ENCODE measurements at regions of chr11 and their contacts with region 1.

Region 1: DNA sequence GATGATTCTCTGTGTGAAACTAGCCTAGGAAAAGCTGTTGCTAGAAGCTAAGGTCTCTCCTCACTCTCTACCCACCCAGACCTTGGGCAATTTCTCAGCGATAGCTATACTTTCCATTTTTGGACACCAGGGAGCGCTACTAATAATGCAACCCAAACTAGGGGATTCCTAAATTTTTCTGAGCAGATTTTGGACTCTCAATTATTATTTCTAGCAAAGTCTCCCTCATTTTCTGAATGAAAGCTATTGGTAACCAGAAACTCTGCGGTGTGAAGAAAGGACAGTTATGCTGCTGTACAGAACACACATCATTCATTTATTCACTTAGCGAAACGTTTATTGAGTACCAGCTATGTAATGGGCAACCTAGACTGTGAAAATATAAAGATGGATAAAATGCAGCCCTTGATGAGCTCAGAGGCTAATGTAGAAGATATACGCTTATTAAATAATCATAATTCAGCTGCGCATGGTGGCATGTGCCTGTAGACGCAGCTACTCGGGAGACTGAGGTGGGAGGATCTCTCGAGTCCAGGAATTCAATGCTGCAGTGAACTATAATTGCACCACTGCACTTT is 6.1 kb upstream of the STIM1 start:
- DNase-seq: no peak
- H3K4me3 ChIP-seq: no peak overlapping the region
- H3K27ac ChIP-seq: no peak overlapping the region
- H3K27me3 ChIP-seq: peaks cover 4% of the 10 kb centered on the region
- CTCF ChIP-seq: peak; percentile 80

Region 2: DNA sequence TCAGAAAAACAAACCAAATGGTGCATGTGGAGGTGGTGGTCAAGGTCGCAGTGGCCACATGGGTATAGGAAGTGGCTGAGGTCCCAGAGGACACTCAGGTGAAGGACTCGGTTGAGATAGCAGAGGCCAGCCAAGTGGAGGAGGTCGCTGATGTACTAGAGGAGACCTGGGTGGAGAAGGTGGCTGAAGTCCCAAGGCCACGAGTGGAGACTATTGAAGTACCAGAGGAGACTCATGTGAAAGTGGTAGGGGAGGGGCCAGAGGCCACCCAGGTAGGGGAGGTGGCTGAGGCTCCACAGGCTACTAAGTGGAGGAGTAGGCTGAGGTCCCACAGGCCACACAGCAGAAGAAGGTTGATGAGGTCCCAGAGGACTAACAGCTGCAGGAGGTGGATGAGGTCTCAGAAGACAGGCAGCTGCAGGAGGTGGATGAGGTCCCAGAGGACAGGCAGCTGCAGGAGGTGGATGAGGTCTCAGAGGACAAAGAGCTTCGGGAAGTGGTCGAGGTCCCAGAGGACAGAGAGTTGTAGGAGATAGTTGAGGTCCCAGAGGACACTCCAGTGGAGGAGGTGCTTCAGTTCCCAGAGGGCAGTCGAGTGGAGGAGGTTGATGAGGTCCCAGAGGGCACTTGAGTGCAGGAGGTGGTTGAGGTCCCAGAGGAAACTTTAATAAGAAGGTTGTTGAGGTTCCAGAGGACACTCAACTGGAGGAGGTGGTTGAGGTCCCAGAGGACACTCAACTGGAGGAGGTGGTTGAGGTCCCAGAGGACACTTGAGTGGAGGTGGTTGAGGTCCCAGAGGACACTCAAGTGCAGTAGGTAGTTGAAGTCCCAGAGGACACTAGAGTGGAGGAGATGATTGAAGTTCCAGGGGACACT is 510.5 kb before region 1 on chr11:
- CTCF ChIA-PET with region 1: no interaction called
- POLR2A ChIA-PET with region 1: no interaction called
- DNase-seq: no peak
- H3K4me3 ChIP-seq: no peak overlapping the region
- H3K27ac ChIP-seq: no peak overlapping the region
- H3K27me3 ChIP-seq: no peaks in the 10 kb centered on the region
- CTCF ChIP-seq: no peak

Region 3: GRCh38 chr11:3674189-3674588 is 175.2 kb before region 1 on chr11:
- CTCF ChIA-PET with region 1: no interaction called
- POLR2A ChIA-PET with region 1: no interaction called
- DNase-seq: peak; percentile 16
- H3K4me3 ChIP-seq: no peak overlapping the region
- H3K27ac ChIP-seq: no peak overlapping the region
- H3K27me3 ChIP-seq: no peaks in the 10 kb centered on the region
- CTCF ChIP-seq: no peak

Region 4: GRCh38 chr11:3879216-3879966 is 30.0 kb after region 1 on chr11:
- CTCF ChIA-PET with region 1: interaction called, 10 read pairs
- POLR2A ChIA-PET with region 1: no interaction called
- DNase-seq: no peak
- H3K4me3 ChIP-seq: no peak overlapping the region
- H3K27ac ChIP-seq: no peak overlapping the region
- H3K27me3 ChIP-seq: no peaks in the 10 kb centered on the region
- CTCF ChIP-seq: no peak

Region 5: GRCh38 chr11:3927133-3927796 is 77.9 kb after region 1 on chr11:
- CTCF ChIA-PET with region 1: interaction called, 11 read pairs
- POLR2A ChIA-PET with region 1: no interaction called
- DNase-seq: no peak
- H3K4me3 ChIP-seq: no peak overlapping the region
- H3K27ac ChIP-seq: no peak overlapping the region
- H3K27me3 ChIP-seq: no peaks in the 10 kb centered on the region
- CTCF ChIP-seq: no peak

Region 6: GRCh38 chr11:3959015-3959919 is 109.9 kb after region 1 on chr11:
- CTCF ChIA-PET with region 1: interaction called, 10 read pairs
- POLR2A ChIA-PET with region 1: no interaction called
- DNase-seq: no peak
- H3K4me3 ChIP-seq: no peak overlapping the region
- H3K27ac ChIP-seq: no peak overlapping the region
- H3K27me3 ChIP-seq: no peaks in the 10 kb centered on the region
- CTCF ChIP-seq: peak; percentile 26; the same call in 1 of the 2 replicates

Region 7: DNA sequence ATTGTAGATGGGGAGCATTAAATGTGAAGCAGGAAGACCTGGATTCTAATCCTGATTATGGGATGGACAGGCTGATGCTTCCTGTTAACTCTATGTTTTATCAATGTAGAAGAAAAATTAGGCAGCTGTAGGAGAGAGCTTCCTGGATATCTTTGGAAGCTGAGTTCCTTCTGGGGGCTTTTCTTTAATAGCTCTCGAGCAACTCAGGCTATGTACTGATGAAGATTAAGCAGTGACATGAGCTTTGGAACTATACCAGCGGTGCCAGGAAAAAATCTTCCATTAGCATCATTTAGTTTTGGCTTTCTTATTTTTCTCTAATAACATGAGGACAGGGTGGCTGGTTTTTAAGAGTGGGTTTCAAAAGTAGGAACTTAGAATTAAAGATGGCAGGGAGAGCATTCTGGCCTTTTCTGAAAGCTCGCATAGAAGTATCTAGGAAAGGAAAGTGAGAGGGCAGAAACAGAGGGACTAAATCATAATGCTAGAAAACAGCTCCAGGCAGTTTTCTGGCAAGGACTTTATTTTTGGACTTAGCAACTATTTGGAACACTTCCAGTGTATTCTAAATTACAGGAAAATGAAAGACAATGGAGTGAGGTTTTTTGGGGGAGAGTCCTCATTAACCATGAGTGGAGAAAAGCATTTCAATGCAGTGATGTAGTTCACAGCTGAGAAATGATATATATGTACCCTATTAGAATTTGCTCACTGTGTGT is 176.0 kb after region 1 on chr11:
- CTCF ChIA-PET with region 1: interaction called, 28 read pairs
- POLR2A ChIA-PET with region 1: no interaction called
- DNase-seq: no peak
- H3K4me3 ChIP-seq: no peak overlapping the region
- H3K27ac ChIP-seq: no peak overlapping the region
- H3K27me3 ChIP-seq: no peaks in the 10 kb centered on the region
- CTCF ChIP-seq: no peak

Region 8: DNA sequence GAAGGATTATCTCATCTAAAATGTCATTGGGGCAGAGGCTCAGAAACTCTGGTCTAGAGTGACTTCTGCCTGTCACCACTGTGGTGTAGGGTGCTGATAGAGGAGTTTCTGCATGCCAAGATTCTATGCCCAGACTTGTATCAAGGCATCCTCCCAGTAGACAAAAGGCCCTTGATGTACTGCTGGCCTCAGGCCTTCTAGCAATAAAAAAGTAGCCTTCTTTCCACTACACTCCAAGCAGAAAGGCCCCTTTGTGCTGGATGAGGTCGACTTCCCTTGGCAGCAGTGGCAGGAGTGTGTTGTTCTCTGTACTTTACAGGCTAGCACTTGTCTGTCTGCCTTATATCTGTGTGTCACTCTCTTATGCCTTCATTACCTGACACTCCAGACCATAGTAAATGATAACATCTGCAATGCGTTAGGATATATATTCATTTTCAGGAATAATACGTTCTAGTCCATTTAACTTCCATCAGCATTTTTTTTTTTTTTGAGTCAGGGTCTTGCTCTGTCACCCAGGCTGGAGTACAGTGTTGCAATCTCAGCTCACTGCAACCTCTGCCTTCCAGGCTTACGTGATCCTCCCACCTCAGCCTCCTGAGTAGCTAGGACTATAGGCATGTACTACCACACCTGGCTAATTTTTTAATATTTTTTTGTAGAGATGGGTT is 195.7 kb after region 1 on chr11:
- CTCF ChIA-PET with region 1: interaction called, 18 read pairs
- POLR2A ChIA-PET with region 1: no interaction called
- DNase-seq: no peak
- H3K4me3 ChIP-seq: no peak overlapping the region
- H3K27ac ChIP-seq: no peak overlapping the region
- H3K27me3 ChIP-seq: no peaks in the 10 kb centered on the region
- CTCF ChIP-seq: no peak